Right ventricle myocardium inferior (tissue), 1 donor: ENCODE measurements at regions of chrX and their contacts with region 1.

Region 1: GRCh38 chrX:48737213-48737938 is 24.2 kb upstream of the GLOD5 start:
- DNase-seq: peak; percentile 93
- ATAC-seq: peak; percentile 100

Region 2: DNA sequence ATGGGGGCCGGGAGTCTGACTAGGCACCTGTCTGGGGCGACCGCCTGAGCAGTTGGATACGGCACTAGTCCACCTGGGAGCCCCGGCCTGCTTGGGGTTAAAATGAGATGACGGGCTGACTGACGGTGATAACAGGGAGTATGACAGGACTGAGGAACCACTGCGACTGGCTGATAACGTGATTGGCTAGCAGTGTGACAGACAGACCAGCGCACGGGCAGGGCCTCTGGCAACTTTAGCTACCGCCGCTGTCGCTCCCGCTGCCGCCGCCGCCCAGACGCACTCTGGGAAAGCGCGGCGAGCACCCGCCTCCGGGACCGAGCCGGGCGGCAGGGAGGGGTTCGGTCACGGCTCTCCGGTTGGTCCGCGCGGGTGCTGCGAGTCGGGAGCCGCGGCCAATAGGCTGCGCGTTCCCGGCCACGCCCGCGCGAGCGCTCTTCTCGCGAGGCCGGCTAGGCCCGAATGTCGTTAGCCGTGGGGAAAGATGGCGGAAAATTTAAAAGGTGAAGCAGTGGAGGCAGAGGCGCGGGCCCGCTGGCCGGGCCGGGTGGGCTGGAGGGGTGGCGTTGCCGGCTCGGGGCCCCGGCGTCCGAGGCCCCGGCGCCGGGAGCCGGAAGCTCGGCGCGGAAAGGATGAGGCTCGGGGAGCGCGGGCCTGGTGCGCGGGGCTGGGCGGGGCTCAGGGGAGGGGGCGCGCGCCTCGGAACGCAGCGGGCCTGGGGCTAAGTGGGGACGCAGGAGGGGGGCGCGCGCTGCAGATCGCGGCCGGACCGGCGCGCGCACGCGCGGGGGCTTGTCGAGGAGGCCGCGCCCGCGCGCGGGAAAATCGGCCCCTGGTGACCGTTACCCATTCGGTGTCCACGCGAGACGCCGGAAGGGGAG is 40.8 kb before region 1 on chrX and contains the start of gene SUV39H1:
- intact Hi-C with region 1: loop called (anchors 5 kb)
- DNase-seq: peak; percentile 95
- ATAC-seq: peak; percentile 99
- total RNA-seq, gene SUV39H1: 2.2 TPM